A673 (cell line): ENCODE measurements at regions of chr4 and their contacts with region 1.

Region 1: DNA sequence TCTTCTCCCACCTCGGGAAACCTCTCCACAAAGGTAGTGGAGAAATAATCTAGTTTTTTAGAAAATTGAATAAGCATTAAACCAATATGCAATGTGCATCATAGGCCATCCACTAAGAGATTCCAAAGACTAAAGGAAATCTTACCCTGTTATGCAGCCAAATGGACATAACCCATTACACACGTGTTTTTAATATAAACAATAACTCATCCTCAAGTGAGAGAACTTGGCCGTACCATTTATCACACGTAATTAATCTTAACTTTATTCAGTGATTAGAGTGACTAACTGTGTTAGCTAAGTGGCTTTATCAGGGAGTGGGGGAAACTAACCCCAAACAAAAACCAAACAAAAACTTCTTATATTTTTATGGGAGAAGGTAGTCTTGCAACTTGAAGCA is 57.8 kb downstream of the AFM start:
- DNase-seq: no peak
- H3K4me3 ChIP-seq: no peak overlapping the region
- H3K27ac ChIP-seq: no peak overlapping the region
- H3K4me1 ChIP-seq: no peaks in the 10 kb centered on the region
- H3K27me3 ChIP-seq: no peaks in the 10 kb centered on the region
- CTCF ChIP-seq: no peak

Region 2: DNA sequence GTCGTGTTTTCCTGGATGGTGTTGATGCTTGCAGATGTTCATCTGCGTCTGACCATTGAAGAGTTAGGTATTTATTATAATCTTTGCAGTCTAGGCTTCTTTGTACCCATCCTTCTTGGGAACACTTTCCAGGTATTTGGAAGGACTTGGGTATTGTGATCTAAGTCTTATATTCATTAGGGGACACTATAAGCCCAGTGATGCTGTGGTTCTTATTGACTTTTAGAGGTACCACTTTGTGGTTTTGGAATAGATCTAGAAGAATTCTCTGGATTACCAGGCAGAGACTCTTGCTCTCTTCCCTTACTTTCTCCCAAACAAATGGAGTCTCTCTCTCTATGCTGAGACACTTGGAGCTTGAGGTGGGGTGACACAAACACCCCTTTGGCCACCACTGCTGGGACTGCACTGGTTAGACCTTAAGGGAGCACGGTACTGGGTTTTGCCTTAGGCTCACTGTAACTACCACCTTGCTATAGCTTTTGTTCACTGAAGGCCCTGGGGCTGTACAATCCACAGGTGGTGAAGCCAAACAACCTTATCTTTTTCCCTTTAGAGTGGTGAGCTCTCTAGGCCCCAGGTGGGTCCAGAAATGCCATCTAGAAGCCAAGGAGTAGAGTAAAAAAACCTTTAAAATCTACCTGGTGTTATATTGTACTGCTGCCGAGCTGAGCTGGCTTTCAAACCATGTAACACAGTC is 16.1 kb before region 1 on chr4:
- CTCF ChIA-PET with region 1: no interaction called
- POLR2A ChIA-PET with region 1: interaction called, 10 read pairs
- intact Hi-C with region 1: no loop called
- DNase-seq: no peak
- H3K4me3 ChIP-seq: no peak overlapping the region
- H3K27ac ChIP-seq: no peak overlapping the region
- H3K4me1 ChIP-seq: peaks cover 14% of the 10 kb centered on the region
- H3K27me3 ChIP-seq: no peaks in the 10 kb centered on the region
- CTCF ChIP-seq: no peak

Region 3: DNA sequence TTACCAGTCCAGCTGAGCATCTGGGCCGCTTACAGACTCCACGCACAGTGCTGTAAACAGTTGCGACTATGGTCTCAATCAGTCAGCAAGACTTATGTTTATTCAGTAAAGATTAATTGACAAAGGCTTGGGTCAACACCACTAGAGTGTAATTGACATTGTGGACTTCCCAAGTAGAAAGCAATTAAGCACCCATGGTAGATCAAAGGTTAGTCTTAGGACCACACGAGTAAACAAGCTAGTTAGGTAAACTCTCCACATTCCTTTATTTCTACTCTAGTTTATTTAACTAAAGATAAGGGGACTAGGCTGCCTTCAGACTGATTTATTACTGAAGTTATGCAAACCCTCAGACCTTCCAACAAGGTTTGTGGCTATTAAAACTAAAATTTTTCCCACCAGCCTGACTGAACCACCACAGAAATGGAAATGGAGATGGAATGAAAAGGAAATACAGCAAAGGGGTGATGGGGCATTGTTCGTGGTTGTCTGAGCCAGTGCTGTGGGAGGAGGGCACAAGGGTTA is 662.7 kb after region 1 on chr4:
- CTCF ChIA-PET with region 1: no interaction called
- POLR2A ChIA-PET with region 1: no interaction called
- intact Hi-C with region 1: no loop called
- DNase-seq: no peak
- H3K4me3 ChIP-seq: no peak overlapping the region
- H3K27ac ChIP-seq: no peak overlapping the region
- H3K4me1 ChIP-seq: no peaks in the 10 kb centered on the region
- H3K27me3 ChIP-seq: no peaks in the 10 kb centered on the region
- CTCF ChIP-seq: no peak

Region 4: GRCh38 chr4:74431113-74431826 is 891.9 kb after region 1 on chr4:
- CTCF ChIA-PET with region 1: no interaction called
- POLR2A ChIA-PET with region 1: no interaction called
- intact Hi-C with region 1: no loop called
- DNase-seq: no peak
- H3K4me3 ChIP-seq: no peak overlapping the region
- H3K27ac ChIP-seq: no peak overlapping the region
- H3K4me1 ChIP-seq: no peaks in the 10 kb centered on the region
- H3K27me3 ChIP-seq: no peaks in the 10 kb centered on the region
- CTCF ChIP-seq: no peak